ENCODE measurements at regions of chr2 and their contacts with region 1.

Region 1: DNA sequence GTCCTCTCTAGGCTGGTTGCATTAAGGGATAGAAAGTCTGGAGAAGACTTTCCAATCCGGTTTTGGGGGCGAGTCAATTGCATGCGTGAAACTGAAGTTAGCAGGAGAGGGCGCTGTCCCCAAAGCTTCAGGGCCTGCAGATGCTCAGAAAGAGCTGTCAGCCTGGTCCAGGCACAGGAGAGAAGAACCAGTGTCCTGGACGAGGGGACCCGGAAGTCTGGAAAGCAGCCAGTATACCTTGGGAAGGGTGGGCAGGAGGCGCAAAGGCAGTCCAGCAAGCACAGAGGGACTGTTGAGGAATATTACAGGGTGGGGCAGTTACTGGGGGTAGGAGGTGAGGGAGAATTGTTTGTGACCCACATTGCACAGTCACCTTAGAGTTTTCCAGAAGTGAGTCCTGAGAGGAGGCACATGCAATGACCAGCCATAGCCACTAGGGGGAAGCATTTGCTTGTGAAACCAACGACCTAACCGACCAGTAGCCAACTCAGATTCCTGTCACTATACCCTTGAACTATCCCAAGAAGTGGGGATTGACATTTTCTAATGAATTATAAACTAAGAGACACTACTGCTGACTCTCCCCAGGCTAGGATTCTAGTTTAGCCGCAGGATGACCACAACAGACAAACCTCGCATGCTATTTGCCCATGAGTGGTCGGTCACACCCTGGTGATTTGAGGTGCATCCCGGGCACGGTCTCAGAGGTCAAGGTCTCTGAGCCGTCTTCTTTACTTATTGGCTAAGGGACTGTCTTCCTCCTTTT is 172.8 kb downstream of the RDH14 start:
- DNase-seq: peak; percentile 91
- H3K4me3 ChIP-seq: no peak overlapping the region
- H3K27ac ChIP-seq: peak overlapping the region; percentile 51 to 71 (median 64)
- H3K4me1 ChIP-seq: no peaks in the 10 kb centered on the region
- H3K27me3 ChIP-seq: no peaks in the 10 kb centered on the region
- CTCF ChIP-seq: peak; percentile 82 to 99 (median 90)
- EP300 ChIP-seq: no peak
- POLR2A ChIP-seq: no peak

Region 2: DNA sequence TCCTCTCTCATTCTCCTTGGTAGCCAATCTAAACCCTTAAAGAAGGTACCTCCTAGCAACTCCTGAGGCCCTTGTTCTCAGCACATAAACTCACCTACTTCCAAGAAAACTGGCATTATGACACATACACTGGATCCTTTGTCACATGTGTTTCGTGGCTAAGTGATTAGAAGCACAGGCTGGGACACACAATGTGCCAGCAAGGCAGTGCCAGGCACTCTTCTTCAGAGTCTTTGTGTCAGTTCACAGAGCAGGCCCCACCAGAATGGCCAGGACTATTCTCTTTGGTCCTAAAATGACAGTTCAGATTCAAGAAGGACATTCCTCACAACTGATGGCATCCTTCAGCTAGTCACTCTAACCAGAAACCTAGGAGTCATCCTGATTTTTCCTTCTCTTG is 674.3 kb before region 1 on chr2:
- intact Hi-C with region 1: no loop called
- DNase-seq: no peak
- H3K4me3 ChIP-seq: no peak overlapping the region
- H3K27ac ChIP-seq: no peak overlapping the region
- H3K4me1 ChIP-seq: no peaks in the 10 kb centered on the region
- H3K27me3 ChIP-seq: no peaks in the 10 kb centered on the region
- CTCF ChIP-seq: no peak
- EP300 ChIP-seq: no peak
- POLR2A ChIP-seq: no peak

Region 3: DNA sequence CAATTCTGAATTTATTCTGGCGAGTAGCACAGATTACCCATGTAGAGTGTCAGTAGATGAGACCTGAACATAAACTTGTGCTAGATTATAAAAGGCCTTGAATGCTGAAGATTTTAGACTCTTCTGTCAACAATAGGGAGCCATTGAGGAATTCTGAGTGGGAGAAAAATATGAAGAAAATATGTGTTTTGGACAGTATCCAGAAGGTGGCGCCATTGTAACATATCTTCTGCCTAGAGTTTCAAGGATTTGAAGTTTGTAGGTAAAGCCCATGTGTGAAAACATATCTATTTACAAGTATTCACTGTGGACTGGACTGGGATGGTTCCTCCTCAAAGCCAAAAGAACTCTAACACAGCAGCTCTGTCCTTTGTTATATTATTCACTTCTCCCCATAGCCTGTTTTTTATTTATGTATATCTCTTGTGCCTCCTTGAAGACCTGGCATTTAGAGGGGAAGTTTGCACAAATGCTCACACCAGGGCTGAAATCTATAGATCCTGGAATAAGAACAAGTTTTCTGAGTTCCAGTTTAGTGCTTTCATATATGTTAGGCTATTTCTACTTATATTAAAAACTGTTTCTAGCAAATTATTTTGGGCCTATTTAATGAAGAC is 47.9 kb after region 1 on chr2:
- intact Hi-C with region 1: loop called (anchors 5 kb)
- DNase-seq: no peak
- H3K4me3 ChIP-seq: no peak overlapping the region
- H3K27ac ChIP-seq: peak overlapping the region in 2 of 4 donors; percentile 23 to 28
- H3K4me1 ChIP-seq: peaks cover 0 to 37% (median 23%) of the 10 kb centered on the region in 4 donors
- H3K27me3 ChIP-seq: no peaks in the 10 kb centered on the region
- CTCF ChIP-seq: peak in 3 of 4 experiments; percentile 14 to 53 (median 22)
- EP300 ChIP-seq: no peak
- POLR2A ChIP-seq: no peak

Region 4: DNA sequence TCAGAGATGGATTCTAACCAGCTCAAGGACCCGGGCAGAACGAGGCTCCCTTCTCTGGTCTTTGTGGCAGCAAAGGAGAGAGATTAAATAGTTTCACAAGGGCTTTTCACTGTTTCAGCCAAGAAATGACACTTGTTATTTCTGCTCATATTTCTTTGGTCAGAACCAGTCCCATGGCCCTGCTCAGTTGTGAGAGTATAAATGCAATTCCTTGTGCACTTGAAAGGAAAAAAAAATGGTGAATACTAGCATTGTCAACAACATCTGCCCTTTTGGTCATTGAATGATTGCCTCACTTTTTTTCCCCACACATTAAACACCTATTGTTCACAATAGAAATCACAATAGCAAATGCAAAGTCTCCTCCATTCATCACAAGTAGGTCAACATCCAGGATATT is 68.4 kb after region 1 on chr2:
- intact Hi-C with region 1: no loop called
- DNase-seq: no peak
- H3K4me3 ChIP-seq: no peak overlapping the region
- H3K27ac ChIP-seq: peak overlapping the region in 3 of 4 donors; percentile 34 to 61 (median 54)
- H3K4me1 ChIP-seq: peaks cover 0 to 21% (median 10%) of the 10 kb centered on the region in 4 donors
- H3K27me3 ChIP-seq: no peaks in the 10 kb centered on the region
- CTCF ChIP-seq: no peak
- EP300 ChIP-seq: no peak
- POLR2A ChIP-seq: no peak

Region 5: DNA sequence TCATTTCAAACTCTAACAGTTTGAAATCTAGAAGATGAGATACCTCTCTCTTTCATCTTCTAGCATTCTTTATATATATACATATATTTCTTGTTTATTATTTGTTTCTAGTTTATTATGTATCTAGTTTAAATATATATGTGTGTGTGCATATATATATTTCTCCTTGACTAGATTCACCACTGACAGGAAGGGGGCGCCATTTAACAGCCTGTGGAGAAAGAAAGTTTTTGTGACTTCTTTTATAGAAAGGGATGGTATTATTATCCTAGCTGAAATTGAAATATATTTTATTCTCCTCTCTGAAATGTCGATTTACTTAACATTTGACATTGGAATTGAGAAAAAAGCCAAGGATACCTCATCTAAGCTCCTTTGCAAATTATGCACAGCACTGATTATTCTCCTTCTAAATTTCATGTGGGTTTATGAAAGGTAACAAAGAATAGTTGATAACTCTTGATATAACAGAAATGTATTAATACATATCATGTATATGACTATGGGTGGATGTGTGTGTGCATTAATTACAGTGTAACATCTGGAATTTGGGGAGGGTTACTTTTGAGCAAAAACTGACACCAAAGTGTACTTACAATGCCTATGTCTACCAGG is 362.4 kb after region 1 on chr2:
- intact Hi-C with region 1: loop called (anchors 5 kb)
- DNase-seq: peak; percentile 77
- H3K4me3 ChIP-seq: no peak overlapping the region
- H3K27ac ChIP-seq: no peak overlapping the region
- H3K4me1 ChIP-seq: peaks cover 0 to 11% (median 5%) of the 10 kb centered on the region in 4 donors
- H3K27me3 ChIP-seq: no peaks in the 10 kb centered on the region
- CTCF ChIP-seq: peak; percentile 53 to 84 (median 72)
- EP300 ChIP-seq: no peak
- POLR2A ChIP-seq: no peak

Region 6: GRCh38 chr2:19863303-19864041 is 1475.8 kb after region 1 on chr2:
- intact Hi-C with region 1: loop called (anchors 2 kb)
- DNase-seq: peak; percentile 82
- H3K4me3 ChIP-seq: peak overlapping the region in 1 of 4 donors; percentile 5
- H3K27ac ChIP-seq: no peak overlapping the region
- H3K4me1 ChIP-seq: peaks cover 0 to 23% (median 9%) of the 10 kb centered on the region in 4 donors
- H3K27me3 ChIP-seq: peaks cover 0 to 8% (median 0%) of the 10 kb centered on the region in 3 donors
- CTCF ChIP-seq: peak; percentile 93 to 98 (median 96)
- EP300 ChIP-seq: no peak
- POLR2A ChIP-seq: no peak